ENCODE measurements at regions of chr16 and their contacts with region 1.

Region 1: DNA sequence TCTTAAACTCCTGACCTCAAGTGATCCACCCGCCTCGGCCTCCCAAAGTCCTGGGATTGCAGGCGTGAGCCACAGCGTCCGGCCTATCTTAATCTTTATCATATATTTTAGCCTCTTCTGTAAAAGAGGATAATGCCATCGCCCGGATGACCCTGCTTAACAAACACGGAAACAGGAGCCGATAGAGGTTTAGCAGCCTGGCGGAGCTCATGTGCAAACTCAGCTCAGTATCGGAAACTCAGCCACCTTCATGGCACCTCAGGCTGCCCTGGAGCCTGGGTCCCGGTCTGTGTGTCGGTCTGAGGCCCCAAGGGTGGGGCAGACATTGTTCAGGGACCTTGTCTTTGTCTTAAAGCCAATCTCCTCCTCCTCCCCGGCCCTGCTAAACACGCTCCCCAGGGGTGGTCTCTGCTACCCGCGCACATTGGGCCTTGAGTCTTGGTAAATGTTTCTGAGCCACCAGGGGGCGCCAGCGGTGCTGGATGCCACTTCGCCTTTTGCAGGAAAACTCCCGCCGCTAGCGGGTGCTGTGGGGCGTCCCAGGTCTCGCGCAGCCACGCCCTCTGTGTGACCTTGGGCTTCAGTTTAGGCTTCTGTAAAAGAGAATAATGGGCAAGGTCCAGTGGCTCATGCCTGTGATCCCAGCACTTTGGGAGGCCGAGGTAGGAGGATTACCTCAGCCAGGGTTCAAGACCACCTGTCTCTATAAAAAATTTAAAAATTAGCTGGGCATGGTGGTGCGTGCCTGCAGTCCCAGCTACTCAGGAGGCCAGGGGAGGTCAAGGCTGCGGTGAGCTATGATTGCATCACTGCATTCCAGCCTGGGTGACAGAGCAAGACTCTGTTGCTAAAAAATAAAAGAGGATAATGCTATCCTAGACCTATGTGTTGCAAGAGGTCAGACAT is 2.7 kb downstream of the CETP start:
- DNase-seq: peak; percentile 96
- ATAC-seq: peak; percentile 94
- H3K4me3 Mint-ChIP-seq: no peak overlapping the region
- H3K27ac Mint-ChIP-seq: peak overlapping the region; percentile 52
- H3K4me1 Mint-ChIP-seq: peaks cover 21% of the 10 kb centered on the region
- H3K27me3 Mint-ChIP-seq: no peaks in the 10 kb centered on the region

Region 2: GRCh38 chr16:56860226-56861020 is 104.1 kb before region 1 on chr16:
- CTCF ChIA-PET with region 1: interaction called, 10 read pairs
- DNase-seq: peak; percentile 88
- ATAC-seq: peak; percentile 83
- H3K4me3 Mint-ChIP-seq: peak overlapping the region; percentile 57
- H3K27ac Mint-ChIP-seq: peak overlapping the region; percentile 93
- H3K4me1 Mint-ChIP-seq: peaks cover 56% of the 10 kb centered on the region
- H3K27me3 Mint-ChIP-seq: peaks cover 2% of the 10 kb centered on the region

Region 3: GRCh38 chr16:56950881-56951771 is 13.4 kb before region 1 on chr16:
- CTCF ChIA-PET with region 1: interaction called, 56 read pairs
- DNase-seq: peak; percentile 79
- ATAC-seq: peak; percentile 89
- H3K4me3 Mint-ChIP-seq: no peak overlapping the region
- H3K27ac Mint-ChIP-seq: peak overlapping the region; percentile 51
- H3K4me1 Mint-ChIP-seq: peaks cover 24% of the 10 kb centered on the region
- H3K27me3 Mint-ChIP-seq: peaks cover 3% of the 10 kb centered on the region

Region 4: GRCh38 chr16:56988948-56989945 is 24.8 kb after region 1 on chr16 and contains the start of gene NLRC5:
- CTCF ChIA-PET with region 1: interaction called, 75 read pairs
- DNase-seq: peak; percentile 95
- ATAC-seq: peak; percentile 88
- H3K4me3 Mint-ChIP-seq: peak within 1 kb of the TSS; percentile 99
- H3K27ac Mint-ChIP-seq: peak within 1 kb of the TSS; percentile 99
- H3K4me1 Mint-ChIP-seq: peaks cover 60% of the 10 kb centered on the region
- H3K27me3 Mint-ChIP-seq: no peaks in the 10 kb centered on the region
- total RNA-seq, gene NLRC5: 156 to 287 TPM

Region 5: GRCh38 chr16:57023541-57024249 is 59.2 kb after region 1 on chr16:
- CTCF ChIA-PET with region 1: interaction called, 21 read pairs
- DNase-seq: peak; percentile 69
- ATAC-seq: peak; percentile 62
- H3K4me3 Mint-ChIP-seq: no peak overlapping the region
- H3K27ac Mint-ChIP-seq: peak overlapping the region; percentile 70
- H3K4me1 Mint-ChIP-seq: peaks cover 58% of the 10 kb centered on the region
- H3K27me3 Mint-ChIP-seq: no peaks in the 10 kb centered on the region

Region 6: DNA sequence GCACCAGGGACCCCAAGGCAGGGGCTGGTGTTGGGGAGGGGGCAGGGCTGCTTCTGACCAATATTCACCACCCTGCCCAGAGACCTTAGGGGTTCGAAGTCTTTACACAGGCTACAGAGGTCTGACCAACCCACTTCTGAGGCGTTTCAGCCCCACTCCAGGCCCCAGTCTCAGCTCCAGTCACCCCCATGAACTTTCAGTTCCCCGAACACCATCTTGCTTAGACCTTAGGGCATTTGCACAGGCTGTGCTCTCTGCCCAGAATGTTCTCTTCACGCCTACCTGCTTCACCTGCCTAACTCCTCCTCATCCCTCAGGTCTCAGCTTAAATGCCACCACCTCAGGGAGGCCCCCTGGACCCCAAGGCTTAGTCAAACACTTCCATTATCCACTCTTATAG is 102.1 kb after region 1 on chr16:
- CTCF ChIA-PET with region 1: interaction called, 13 read pairs
- DNase-seq: no peak
- ATAC-seq: no peak
- H3K4me3 Mint-ChIP-seq: no peak overlapping the region
- H3K27ac Mint-ChIP-seq: no peak overlapping the region
- H3K4me1 Mint-ChIP-seq: peaks cover 21% of the 10 kb centered on the region
- H3K27me3 Mint-ChIP-seq: no peaks in the 10 kb centered on the region